ENCODE measurements at regions of chr4 and their contacts with region 1.

Region 1: DNA sequence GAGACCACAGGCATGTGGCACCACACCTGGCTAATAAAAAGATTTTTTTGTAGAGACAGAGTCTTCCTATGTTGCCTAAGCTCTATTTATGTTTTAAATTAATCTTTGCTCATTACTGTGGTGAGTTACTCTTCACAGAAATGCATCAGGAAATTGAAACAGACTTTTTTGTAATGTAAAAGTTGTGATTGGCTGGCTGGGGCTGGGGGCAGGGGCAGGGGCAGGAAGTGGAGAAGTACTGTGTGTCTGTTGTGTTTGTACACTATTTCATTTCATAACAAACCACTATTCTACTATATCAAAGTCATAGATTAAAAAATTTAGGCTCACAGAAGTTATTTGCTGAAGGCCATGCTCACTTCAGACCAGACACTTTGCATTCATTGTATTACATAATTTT is 19.1 kb upstream of the ABRAXAS1 start:
- DNase-seq: no peak
- ATAC-seq: no peak
- H3K4me3 ChIP-seq: no peak overlapping the region
- H3K27ac ChIP-seq: no peak overlapping the region
- H3K4me1 ChIP-seq: no peaks in the 10 kb centered on the region; a peak in 2 of 5 replicates
- H3K27me3 ChIP-seq: no peaks in the 10 kb centered on the region
- CTCF ChIP-seq: no peak
- EP300 ChIP-seq: no peak
- POLR2A ChIP-seq: no peak
- RAD21 ChIP-seq: no peak

Region 2: GRCh38 chr4:83362492-83363329 is 141.3 kb before region 1 on chr4:
- CTCF ChIA-PET with region 1: no interaction called
- POLR2A ChIA-PET with region 1: interaction called, 3 read pairs
- in situ Hi-C with region 1: no loop called
- intact Hi-C with region 1: loop called (anchors 5 kb)
- DNase-seq: peak in 2 of 4 experiments; percentile 16 to 38
- ATAC-seq: peak; percentile 86
- H3K4me3 ChIP-seq: no peak overlapping the region
- H3K27ac ChIP-seq: no peak overlapping the region
- H3K4me1 ChIP-seq: peaks cover 0 to 7% of the 10 kb centered on the region in 2 experiments; a peak in 2 of 5 replicates
- H3K27me3 ChIP-seq: peaks cover 0 to 10% of the 10 kb centered on the region in 2 experiments; a peak in 4 of 5 replicates
- CTCF ChIP-seq: peak; percentile 24 to 60 (median 58); a peak in 5 of 6 replicates
- EP300 ChIP-seq: no peak
- POLR2A ChIP-seq: no peak
- RAD21 ChIP-seq: peak; percentile 23 to 57; a peak in 2 of 4 replicates

Region 3: GRCh38 chr4:83490876-83491450 is 13.0 kb before region 1 on chr4:
- CTCF ChIA-PET with region 1: no interaction called
- POLR2A ChIA-PET with region 1: interaction called, 3 read pairs
- in situ Hi-C with region 1: no loop called
- intact Hi-C with region 1: loop called (anchors 2 kb)
- DNase-seq: peak; percentile 63 to 76 (median 70)
- ATAC-seq: peak; percentile 41; the same call in 1 of the 3 replicates
- H3K4me3 ChIP-seq: no peak overlapping the region
- H3K27ac ChIP-seq: no peak overlapping the region
- H3K4me1 ChIP-seq: peaks cover 18 to 23% of the 10 kb centered on the region in 2 experiments; a peak in 4 of 5 replicates
- H3K27me3 ChIP-seq: no peaks in the 10 kb centered on the region
- CTCF ChIP-seq: peak; percentile 68 to 88 (median 77)
- EP300 ChIP-seq: no peak
- POLR2A ChIP-seq: no peak
- RAD21 ChIP-seq: peak; percentile 48 to 66; a peak in 3 of 4 replicates

Region 4: GRCh38 chr4:83757121-83757621 is 253.2 kb after region 1 on chr4:
- CTCF ChIA-PET with region 1: no interaction called
- POLR2A ChIA-PET with region 1: no interaction called
- in situ Hi-C with region 1: no loop called
- intact Hi-C with region 1: loop called (anchors 10 kb)
- DNase-seq: peak; percentile 17 to 86 (median 54)
- ATAC-seq: peak; percentile 91
- H3K4me3 ChIP-seq: no peak overlapping the region
- H3K27ac ChIP-seq: peak overlapping the region; percentile 57
- H3K4me1 ChIP-seq: peaks cover 0 to 23% of the 10 kb centered on the region in 2 experiments; a peak in 3 of 5 replicates
- H3K27me3 ChIP-seq: no peaks in the 10 kb centered on the region
- CTCF ChIP-seq: peak in 1 of 3 experiments; percentile 10; a peak in 1 of 6 replicates
- EP300 ChIP-seq: peak; percentile 83
- POLR2A ChIP-seq: no peak
- RAD21 ChIP-seq: no peak; a peak in 2 of 4 replicates